H1 (cell line): ENCODE measurements at regions of chr1 and their contacts with region 1.

Region 1: DNA sequence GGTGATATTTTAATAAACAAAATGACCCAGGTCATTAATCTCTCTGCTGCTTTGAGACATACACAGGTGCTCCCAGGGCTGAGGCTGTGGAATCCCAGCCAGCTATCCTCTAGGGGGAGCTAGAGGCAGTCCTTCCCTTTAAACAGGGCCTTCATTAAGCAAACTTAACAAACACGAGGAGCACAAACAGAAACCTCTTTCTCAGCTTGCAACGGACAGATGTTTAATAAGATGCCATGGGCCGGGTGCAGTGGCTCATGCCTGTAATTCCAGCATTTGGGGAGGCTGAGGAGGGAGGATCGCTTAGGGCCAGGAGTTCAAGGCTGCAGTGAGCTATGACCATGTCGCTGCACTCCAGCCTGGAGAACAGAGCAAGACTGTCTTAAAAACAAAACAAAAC is 106.7 kb downstream of the HIVEP3 start:
- DNase-seq: peak; percentile 50 to 75
- H3K4me3 ChIP-seq: no peak overlapping the region
- H3K27ac ChIP-seq: no peak overlapping the region
- H3K4me1 ChIP-seq: peaks cover 0 to 3% (median 0%) of the 10 kb centered on the region in 4 experiments; a peak in 2 of 7 replicates
- H3K27me3 ChIP-seq: no peaks in the 10 kb centered on the region
- CTCF ChIP-seq: peak; percentile 66 to 83 (median 74)
- EP300 ChIP-seq: no peak
- POLR2A ChIP-seq: no peak
- RAD21 ChIP-seq: peak; percentile 72 to 86

Region 2: GRCh38 chr1:41650028-41650880 is 161.8 kb before region 1 on chr1:
- CTCF ChIA-PET with region 1: no interaction called
- POLR2A ChIA-PET with region 1: no interaction called
- DNase-seq: no peak
- H3K4me3 ChIP-seq: no peak overlapping the region
- H3K27ac ChIP-seq: no peak overlapping the region
- H3K4me1 ChIP-seq: peaks cover 0 to 4% (median 2%) of the 10 kb centered on the region in 4 experiments; a peak in 4 of 7 replicates
- H3K27me3 ChIP-seq: no peaks in the 10 kb centered on the region
- CTCF ChIP-seq: no peak
- EP300 ChIP-seq: no peak
- POLR2A ChIP-seq: no peak
- RAD21 ChIP-seq: no peak

Region 3: DNA sequence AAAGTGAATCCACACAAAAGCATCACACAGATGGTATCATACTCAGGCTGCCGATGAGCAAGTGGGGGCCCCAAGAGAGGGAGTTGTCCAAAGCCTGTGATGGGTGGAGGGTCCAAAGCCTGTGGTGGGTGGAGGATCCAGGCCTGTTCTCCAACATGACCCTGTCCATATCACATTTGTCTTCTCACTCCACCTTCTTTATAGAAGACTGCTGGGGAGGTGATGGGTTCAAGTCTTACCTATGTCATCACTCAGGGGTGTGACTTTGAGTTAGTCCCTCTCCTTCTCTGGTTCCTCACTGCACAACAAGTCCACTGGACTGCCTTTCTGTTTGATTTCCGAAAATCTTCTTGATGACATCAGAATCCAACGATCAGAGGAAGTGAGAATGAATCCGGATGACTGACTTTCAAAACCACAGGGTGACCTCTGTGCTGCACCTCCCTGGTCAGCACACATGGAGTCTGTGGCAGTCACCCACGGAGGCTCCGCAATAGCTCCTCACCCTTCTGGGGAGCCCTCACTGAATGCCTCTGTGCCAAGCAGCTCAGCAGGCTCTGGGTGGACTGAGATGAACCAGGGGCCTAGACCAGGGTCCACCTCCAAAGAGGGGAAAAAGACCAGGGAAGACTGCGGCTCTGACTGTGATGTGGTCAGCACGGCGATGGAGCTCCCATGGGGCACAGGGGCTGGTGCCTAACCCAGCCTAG is 60.1 kb before region 1 on chr1:
- CTCF ChIA-PET with region 1: no interaction called
- POLR2A ChIA-PET with region 1: no interaction called
- DNase-seq: no peak
- H3K4me3 ChIP-seq: no peak overlapping the region
- H3K27ac ChIP-seq: no peak overlapping the region
- H3K4me1 ChIP-seq: peaks cover 0 to 5% (median 3%) of the 10 kb centered on the region in 4 experiments; a peak in 4 of 7 replicates
- H3K27me3 ChIP-seq: no peaks in the 10 kb centered on the region
- CTCF ChIP-seq: no peak
- EP300 ChIP-seq: no peak
- POLR2A ChIP-seq: no peak
- RAD21 ChIP-seq: no peak

Region 4: GRCh38 chr1:41773144-41773591 is 38.9 kb before region 1 on chr1:
- CTCF ChIA-PET with region 1: no interaction called
- POLR2A ChIA-PET with region 1: no interaction called
- DNase-seq: no peak
- H3K4me3 ChIP-seq: no peak overlapping the region
- H3K27ac ChIP-seq: no peak overlapping the region
- H3K4me1 ChIP-seq: no peaks in the 10 kb centered on the region
- H3K27me3 ChIP-seq: no peaks in the 10 kb centered on the region
- CTCF ChIP-seq: no peak
- EP300 ChIP-seq: no peak
- POLR2A ChIP-seq: no peak
- RAD21 ChIP-seq: no peak

Region 5: DNA sequence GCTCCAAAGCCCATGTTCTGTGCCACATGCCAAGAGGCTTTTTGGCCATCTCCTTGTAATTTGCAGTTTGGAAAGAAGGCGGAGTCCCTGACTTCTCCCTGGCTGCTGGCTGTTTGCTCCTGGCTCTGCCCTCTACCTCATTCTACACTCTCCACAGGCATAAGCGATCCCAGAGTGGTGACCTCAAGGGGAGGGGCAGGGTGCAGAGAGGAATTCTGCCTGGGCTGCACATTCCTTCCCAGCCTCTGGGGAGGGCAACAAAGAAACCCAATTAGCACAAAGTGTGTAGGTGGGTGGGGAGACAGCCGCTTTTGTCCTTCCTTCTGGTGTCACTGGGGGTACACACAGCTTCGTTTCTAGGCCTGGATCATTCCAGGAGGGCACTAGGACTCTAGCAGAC is 11.4 kb after region 1 on chr1:
- CTCF ChIA-PET with region 1: interaction called, 15 read pairs
- POLR2A ChIA-PET with region 1: interaction called, 5 read pairs
- DNase-seq: peak; percentile 71 to 83
- H3K4me3 ChIP-seq: peak overlapping the region in 2 of 4 experiments; percentile 14 to 17; a peak in 2 of 8 replicates
- H3K27ac ChIP-seq: 0 out of 2 replicates have a peak overlapping the region, but pooled peaks have one; percentile 16
- H3K4me1 ChIP-seq: peaks cover 3 to 12% (median 5%) of the 10 kb centered on the region in 4 experiments; a peak in 4 of 7 replicates
- H3K27me3 ChIP-seq: no peaks in the 10 kb centered on the region
- CTCF ChIP-seq: no peak
- EP300 ChIP-seq: peak in 1 of 2 experiments; percentile 84; a peak in 1 of 3 replicates
- POLR2A ChIP-seq: no peak
- RAD21 ChIP-seq: peak in 1 of 2 experiments; percentile 18; a peak in 1 of 4 replicates

Region 6: DNA sequence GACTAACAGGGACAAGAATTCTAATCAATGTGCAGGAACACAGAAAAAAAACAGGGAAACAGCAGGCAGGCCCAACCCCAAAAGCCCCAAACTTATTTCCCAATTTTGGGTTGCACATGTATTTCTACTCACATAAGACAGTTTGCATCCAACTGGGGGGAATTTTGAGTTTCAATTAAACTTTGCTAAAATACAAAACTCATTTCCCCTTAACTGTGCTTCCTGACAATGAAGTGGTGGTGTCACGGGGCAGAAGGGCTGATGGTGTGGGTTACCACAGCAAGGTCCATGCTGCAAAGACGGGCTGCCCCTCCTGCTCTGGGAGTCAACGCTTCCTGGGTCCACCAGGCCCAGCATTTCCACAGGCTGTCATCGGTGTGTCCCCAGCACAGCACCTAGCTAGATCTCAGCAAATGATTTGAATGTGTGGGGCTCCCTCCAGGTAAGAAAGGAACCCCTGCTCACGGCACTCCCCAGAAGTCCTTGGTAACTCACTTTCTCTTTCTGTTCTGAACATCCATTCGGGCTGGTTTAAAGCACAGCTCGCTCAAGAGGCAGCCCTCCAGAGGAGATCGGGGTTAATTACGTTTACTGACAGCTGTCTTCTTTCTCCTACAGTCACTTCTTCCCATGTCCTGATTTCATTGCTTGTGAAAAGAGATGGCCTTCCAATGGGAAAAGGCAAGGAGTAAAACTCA is 79.3 kb after region 1 on chr1:
- CTCF ChIA-PET with region 1: interaction called, 10 read pairs
- POLR2A ChIA-PET with region 1: no interaction called
- DNase-seq: no peak
- H3K4me3 ChIP-seq: no peak overlapping the region
- H3K27ac ChIP-seq: no peak overlapping the region
- H3K4me1 ChIP-seq: no peaks in the 10 kb centered on the region
- H3K27me3 ChIP-seq: no peaks in the 10 kb centered on the region
- CTCF ChIP-seq: no peak
- EP300 ChIP-seq: no peak
- POLR2A ChIP-seq: no peak
- RAD21 ChIP-seq: peak; percentile 28 to 46; a peak in 3 of 4 replicates